Dendritic cell treated with granulocyte-macrophage colony-stimulating factor and Interleukin-4, amounts not matched to agents 40 ng/mL and 50 ng/mL, for 4 days (primary cell): ENCODE measurements at regions of chr3 and their contacts with region 1.

Region 1: DNA sequence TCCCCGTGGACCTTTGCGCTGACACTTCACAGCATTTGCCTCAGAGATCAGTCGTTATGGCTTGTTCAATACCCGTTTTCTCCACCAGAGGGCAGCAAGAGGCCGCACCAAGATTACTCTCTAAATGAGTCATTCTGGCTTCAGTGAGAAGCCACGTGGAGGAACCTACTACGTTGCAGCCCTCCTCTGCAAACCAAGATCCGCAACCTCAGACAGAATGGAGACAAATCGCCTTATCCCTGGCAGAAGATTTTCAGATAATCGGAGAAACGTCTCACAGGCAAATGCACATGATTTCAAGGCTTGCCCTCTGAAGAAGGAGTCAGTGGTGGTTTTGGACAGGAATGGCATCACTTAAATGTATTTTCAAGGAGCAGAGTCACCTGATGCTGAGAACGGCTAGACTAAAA is 60.5 kb downstream of the GTPBP8 start:
- H3K4me3 Mint-ChIP-seq: no peak overlapping the region
- H3K27ac Mint-ChIP-seq: no peak overlapping the region
- H3K4me1 Mint-ChIP-seq: peaks cover 5% of the 10 kb centered on the region
- H3K27me3 Mint-ChIP-seq: peaks cover 1% of the 10 kb centered on the region

Region 2: DNA sequence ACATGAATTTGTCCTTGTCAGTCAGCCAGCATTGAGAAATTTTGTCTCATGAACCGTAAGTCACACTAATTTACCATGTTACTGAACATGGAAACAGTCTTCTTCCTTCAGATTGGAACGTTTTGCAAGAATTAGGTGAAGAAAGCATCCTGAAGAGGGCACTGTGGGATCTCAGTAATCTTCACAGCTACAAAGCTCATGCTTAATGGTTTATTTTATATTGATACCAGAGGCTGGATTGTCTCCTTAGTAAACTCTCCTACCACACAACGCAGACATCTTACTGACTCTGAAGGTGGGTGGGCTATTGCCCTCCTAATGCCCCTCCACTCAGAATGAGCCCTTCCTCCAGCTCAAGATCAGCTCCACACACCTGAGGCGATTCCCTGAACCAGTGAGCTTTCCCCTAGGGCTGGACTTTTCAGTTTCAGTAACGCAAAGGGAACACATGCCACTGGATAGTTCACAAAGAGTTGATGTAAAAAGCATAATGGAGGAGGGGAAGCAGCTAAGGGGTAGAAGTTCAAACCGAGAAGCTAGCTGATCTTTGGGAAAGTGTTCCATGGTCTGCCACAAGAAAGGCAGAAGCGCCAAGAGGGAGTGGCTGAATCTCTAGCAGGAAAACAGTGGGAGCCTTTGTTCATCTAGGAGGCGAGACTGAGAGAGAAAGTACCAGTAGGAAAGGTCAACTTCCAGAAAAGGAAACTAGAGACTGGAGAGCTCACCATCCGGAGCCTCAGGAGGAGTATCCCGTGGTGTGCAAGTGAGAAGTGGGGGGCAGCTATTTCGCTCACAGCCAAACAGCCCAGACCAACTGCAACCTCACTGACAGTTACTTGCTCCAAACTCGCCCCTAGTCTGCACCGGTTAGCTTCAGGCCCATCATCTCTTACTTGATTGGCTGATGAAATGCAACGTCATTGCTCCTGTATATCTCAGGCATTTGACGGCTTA is 757.7 kb before region 1 on chr3 and contains the start of gene SLC9C1:
- intact Hi-C with region 1: no loop called
- H3K4me3 Mint-ChIP-seq: peak within 1 kb of the TSS; percentile 59
- H3K27ac Mint-ChIP-seq: no peak within 1 kb of the TSS
- H3K4me1 Mint-ChIP-seq: peaks cover 19% of the 10 kb centered on the region
- H3K27me3 Mint-ChIP-seq: no peaks in the 10 kb centered on the region

Region 3: GRCh38 chr3:113128386-113129015 is 77.2 kb after region 1 on chr3:
- intact Hi-C with region 1: no loop called
- H3K4me3 Mint-ChIP-seq: no peak overlapping the region
- H3K27ac Mint-ChIP-seq: no peak overlapping the region
- H3K4me1 Mint-ChIP-seq: peaks cover 10% of the 10 kb centered on the region
- H3K27me3 Mint-ChIP-seq: peaks cover 1% of the 10 kb centered on the region

Region 4: DNA sequence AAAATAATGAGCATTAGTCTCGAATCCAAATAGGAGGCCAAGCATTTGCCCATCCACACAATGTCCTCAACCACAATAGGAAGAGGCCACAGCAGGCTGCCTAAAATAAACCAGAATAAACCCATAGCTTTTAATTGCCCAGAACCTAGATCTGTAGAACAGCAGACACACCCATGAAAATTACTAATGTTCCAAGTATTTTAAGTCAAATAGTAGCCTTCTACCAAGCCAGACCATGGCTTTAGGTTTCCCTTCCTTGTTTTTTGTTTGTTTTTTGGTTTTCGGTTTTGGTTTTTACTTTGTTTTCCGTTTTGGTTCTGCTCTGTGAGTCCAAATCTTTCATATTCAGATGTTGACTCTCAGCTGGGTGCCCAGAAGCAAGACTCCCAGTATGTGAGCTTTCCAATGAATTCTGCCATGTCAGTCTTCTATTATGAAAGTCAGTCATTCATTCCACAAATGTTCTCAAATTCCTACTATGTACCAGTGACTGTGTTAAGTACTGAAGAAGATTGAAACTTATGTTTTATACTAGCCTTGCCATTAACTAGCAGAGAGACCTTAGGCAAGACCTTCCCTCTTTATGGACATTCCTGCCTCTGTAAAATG is 102.3 kb after region 1 on chr3:
- intact Hi-C with region 1: no loop called
- H3K4me3 Mint-ChIP-seq: no peak overlapping the region
- H3K27ac Mint-ChIP-seq: no peak overlapping the region
- H3K4me1 Mint-ChIP-seq: peaks cover 9% of the 10 kb centered on the region
- H3K27me3 Mint-ChIP-seq: peaks cover 1% of the 10 kb centered on the region

Region 5: DNA sequence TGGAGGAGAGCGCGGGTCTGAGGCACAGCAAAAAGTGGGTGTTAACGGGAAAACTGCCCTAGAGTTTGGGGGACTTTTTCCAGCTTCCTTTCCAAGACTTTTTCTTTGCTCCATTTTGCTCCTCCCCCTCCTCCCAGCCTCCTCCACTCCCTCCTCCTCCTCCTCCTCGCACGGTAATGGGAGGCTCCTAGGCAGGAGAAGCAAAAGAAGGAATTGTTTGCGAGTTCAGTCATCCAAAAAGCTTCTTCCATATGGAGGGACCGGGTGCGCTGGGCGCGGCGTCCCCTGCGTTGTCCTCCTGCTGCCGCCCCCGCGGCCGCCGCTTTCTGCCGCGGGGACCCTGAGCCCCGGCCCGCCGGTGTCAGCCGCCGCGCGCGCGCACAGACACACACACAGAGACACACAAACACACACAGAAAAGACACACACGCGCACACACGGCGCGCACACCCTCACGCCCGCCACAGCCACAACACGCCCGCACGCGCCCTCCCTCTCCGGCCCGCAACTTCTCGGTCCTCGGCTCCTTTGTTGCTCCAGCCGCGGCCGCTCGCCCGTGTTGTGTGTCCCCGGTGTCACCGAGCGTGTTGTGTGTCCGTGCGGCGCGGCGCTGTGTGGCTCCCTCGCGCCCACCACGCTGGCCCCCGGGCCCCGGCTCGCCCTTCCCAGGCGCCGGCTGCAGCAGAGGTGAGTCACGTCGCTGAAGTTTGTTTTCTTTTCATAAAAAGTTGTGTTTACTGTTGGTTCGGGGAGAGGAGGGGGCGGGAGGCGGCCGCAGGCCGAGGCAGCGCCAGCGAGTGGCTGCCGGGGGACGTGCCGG is 160.2 kb after region 1 on chr3 and contains the start of gene BOC:
- intact Hi-C with region 1: loop called (anchors 10 kb)
- H3K4me3 Mint-ChIP-seq: peak within 1 kb of the TSS; percentile 77
- H3K27ac Mint-ChIP-seq: peak within 1 kb of the TSS; percentile 3
- H3K4me1 Mint-ChIP-seq: peaks cover 18% of the 10 kb centered on the region
- H3K27me3 Mint-ChIP-seq: peaks cover 74% of the 10 kb centered on the region

Region 6: DNA sequence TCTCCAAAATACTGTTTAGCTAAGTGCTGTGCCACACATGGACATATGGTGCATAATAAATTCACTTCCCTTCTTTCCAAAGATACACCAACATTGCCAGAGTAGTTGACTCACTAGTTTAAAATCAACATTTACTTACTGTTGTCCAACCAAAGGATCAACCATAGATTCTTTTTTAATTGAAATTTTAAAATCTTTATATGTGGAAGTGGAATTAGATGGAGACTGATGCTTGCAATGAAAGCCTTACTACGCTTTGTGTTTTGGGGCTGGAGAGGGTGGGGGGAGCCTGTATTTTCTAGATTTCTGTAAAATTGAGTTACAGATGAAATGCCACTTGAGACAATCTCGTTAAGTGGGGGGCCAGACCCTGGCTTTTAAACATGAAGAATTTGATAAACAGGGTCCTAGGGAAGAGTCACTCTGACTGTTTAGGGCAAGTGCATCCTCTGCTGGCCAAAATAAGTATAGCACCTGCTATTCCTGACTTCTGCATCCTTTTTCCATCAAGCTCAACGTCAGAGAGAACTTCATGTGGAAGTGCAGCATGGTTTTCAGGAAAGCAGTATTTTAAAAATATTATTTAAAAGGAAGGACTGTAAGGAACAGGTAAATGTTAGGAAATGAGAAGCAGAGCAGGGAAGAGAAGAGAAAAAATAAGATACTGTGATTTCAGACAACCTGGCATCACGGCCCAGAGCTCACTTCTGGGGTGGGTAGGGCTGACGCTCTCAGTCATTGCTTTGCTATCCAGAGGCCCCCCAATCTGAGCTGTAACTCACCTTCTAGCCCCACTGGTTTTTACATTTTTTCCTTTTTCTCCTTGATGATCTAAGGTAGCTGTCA is 236.7 kb after region 1 on chr3:
- intact Hi-C with region 1: loop called (anchors 1 kb)
- H3K4me3 Mint-ChIP-seq: no peak overlapping the region
- H3K27ac Mint-ChIP-seq: no peak overlapping the region
- H3K4me1 Mint-ChIP-seq: peaks cover 8% of the 10 kb centered on the region
- H3K27me3 Mint-ChIP-seq: no peaks in the 10 kb centered on the region